ENCODE measurements at regions of chr9 and their contacts with region 1.

Region 1: DNA sequence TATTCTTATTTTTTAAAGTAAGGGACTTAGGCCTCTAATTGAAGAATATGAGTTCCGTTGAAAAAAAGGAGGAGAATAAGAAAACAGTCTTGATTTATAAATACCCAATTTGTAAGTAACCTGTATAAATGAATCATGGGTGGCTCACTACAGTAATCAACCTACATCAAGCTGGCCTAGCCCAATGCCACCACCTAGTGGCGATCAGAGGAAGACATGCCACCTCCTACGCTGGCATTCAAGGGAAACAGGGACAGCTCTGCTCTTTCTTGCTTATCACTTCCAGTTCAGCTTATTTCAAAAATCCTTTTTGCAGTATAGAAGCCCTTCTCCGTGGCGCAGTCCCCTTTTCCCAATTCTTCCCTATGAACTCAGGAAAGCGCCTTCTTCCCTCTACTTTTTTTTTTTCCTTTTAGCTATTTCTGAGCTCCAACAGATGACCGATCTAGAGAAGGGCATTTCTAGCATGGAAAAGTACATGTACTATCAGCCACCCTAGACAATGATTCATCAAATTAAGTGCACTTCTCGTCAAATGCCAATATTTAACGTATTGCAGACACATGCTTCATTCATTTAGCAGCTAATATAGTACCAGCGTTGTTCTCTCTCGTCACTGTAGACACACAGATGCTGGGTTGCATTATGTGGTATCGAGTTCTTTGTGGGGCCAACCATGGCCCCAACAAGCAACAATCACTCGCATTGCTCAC is 28.3 kb downstream of the PTPN3 start:
- DNase-seq: peak; percentile 26
- H3K4me3 ChIP-seq: no peak overlapping the region
- CTCF ChIP-seq: peak; percentile 87

Region 2: GRCh38 chr9:109320742-109321448 is 148.9 kb before region 1 on chr9 and contains the start of gene EPB41L4B:
- CTCF ChIA-PET with region 1: no interaction called
- POLR2A ChIA-PET with region 1: no interaction called
- DNase-seq: peak; percentile 21
- H3K4me3 ChIP-seq: peak within 1 kb of the TSS; percentile 54
- CTCF ChIP-seq: peak; percentile 95

Region 3: GRCh38 chr9:109403766-109404320 is 66.0 kb before region 1 on chr9:
- CTCF ChIA-PET with region 1: interaction called, 10 read pairs
- POLR2A ChIA-PET with region 1: no interaction called
- DNase-seq: no peak
- H3K4me3 ChIP-seq: no peak overlapping the region
- CTCF ChIP-seq: no peak

Region 4: DNA sequence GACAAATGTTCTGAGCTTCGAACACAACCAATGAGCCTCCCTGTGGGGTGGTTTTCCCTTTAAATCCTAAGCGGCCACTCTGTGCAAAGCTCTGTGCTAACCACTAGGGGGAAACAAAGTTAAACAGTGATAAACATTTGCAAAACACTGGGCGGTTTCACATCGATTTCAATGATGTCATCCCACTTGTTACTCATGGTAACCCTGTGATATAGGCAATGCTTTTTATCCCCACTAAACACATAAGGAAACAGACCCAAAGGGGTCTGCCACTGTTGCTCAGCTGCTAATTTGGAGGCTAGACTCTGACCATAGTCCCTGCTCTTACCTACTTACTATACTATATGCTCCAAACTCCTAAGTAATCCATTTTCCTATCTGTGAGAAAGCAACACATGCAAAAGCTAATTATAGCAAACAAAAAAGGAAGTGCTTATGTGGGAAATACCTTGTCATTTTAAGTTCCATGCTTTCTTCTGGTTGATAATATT is 29.0 kb before region 1 on chr9:
- CTCF ChIA-PET with region 1: interaction called, 119 read pairs
- POLR2A ChIA-PET with region 1: no interaction called
- DNase-seq: peak; percentile 42
- H3K4me3 ChIP-seq: no peak overlapping the region
- CTCF ChIP-seq: peak; percentile 73

Region 5: DNA sequence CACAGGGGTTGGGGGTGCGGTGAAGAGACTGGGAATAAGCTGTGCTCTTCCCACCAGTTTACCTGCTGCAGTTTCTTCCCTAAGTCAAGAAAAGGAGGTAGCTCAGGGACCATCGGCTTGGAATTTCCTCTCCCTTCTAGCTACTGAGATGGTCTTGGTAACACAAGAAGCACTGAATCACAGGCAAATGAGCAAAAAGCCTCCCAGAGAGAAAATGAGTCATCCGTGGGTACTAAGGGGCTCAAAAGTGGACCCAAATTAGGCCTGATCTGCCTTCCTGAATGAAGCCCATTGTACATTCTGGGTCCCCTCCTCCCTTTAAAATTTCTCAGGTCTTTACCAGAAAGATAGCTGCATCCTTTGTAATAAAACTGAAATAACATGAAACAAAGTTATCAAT is 21.6 kb before region 1 on chr9:
- CTCF ChIA-PET with region 1: interaction called, 119 read pairs
- POLR2A ChIA-PET with region 1: interaction called, 3 read pairs
- DNase-seq: no peak
- H3K4me3 ChIP-seq: no peak overlapping the region
- CTCF ChIP-seq: no peak

Region 6: DNA sequence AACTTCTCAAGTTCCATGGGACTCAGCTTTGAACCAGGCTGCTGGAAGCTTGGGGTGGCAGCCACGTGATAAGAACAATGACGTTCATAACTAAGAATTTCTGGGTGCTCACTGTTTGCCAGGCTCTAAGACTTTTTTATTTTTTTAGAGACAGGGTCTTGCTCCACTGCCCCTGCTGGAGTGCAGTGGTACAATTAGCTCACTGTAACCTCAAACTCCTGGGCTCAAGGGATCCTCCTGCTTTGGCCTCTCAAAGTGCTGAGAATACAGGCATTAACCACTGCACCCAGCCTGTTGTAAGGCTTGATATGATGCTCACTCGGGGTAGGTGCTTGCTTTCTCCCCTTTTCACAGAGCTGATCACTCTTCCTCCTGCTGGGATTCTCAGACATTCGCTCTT is 10.4 kb before region 1 on chr9:
- CTCF ChIA-PET with region 1: interaction called, 39 read pairs
- POLR2A ChIA-PET with region 1: no interaction called
- DNase-seq: no peak
- H3K4me3 ChIP-seq: no peak overlapping the region
- CTCF ChIP-seq: no peak

Region 7: DNA sequence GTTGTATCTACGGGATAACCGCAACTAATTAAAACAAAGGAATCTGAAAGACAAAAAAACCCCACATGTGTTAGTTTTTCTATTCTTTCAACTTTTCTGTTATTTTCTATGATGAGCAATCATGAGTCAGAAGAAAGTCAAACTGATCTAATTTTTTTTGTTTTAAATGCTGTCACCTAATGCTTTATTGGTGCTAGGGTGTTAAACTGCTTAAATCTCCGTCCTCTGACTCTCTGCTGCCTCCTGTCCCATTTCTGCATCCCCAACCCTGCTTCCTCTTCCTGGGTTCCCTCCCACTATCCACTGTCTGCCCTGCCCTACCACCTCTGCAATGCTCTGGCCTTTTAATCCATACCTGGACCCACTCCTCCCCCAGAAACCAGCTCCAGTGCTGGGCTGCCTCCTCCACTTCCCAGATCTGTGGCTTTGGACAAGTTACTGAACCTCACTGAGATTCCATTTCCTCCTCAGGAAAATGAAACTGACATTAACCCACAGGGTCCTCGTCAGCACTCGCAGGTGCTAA is 12.7 kb after region 1 on chr9:
- CTCF ChIA-PET with region 1: interaction called, 43 read pairs
- POLR2A ChIA-PET with region 1: no interaction called
- DNase-seq: no peak
- H3K4me3 ChIP-seq: no peak overlapping the region
- CTCF ChIP-seq: no peak

Measured in AG04449 (cell line).